Activated CD4-positive, alpha-beta T cell treated with anti-CD3 and anti-CD28 coated beads for 36 hours (primary cell): ENCODE measurements at regions of chr13 and their contacts with region 1.

Region 1: GRCh38 chr13:48400850-48401291 is 12.0 kb downstream of the LPAR6 start:
- DNase-seq: no peak
- ATAC-seq: peak; percentile 21
- H3K4me3 Mint-ChIP-seq: no peak overlapping the region
- H3K27ac Mint-ChIP-seq: peak overlapping the region; percentile 1
- H3K4me1 Mint-ChIP-seq: peaks cover 53% of the 10 kb centered on the region
- H3K27me3 Mint-ChIP-seq: no peaks in the 10 kb centered on the region

Region 2: DNA sequence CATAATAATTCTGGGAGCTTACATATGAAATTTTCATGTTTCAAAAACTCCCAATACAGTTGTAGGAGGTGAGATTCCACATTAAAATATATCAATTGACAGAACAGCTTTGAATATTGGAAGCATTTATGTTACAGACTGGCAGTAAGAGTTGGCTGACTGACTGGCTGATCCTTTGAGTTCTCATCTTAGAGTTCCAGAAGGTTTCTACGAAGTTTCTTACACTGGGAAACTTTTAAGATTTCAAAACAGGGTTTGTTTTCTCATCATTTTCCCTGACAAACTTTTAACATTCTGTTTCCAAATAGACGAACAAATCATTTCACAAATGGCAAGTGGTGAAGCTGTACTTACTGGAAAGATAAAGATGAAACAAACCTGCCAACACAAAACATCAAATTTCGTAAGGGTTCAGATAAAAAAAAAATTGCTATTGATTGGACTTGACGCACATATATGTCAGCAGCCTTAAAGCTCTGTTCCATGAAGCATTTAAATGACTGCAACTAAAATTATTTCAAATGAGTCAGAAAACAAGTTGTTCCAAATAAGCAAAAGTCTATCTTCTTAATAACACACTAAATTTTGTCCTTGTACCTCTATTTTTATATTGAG is 643.3 kb before region 1 on chr13:
- CTCF ChIA-PET with region 1: no interaction called
- POLR2A ChIA-PET with region 1: no interaction called
- intact Hi-C with region 1: no loop called
- DNase-seq: no peak
- ATAC-seq: no peak
- H3K4me3 Mint-ChIP-seq: no peak overlapping the region
- H3K27ac Mint-ChIP-seq: no peak overlapping the region
- H3K4me1 Mint-ChIP-seq: no peaks in the 10 kb centered on the region
- H3K27me3 Mint-ChIP-seq: peaks cover 7% of the 10 kb centered on the region

Region 3: DNA sequence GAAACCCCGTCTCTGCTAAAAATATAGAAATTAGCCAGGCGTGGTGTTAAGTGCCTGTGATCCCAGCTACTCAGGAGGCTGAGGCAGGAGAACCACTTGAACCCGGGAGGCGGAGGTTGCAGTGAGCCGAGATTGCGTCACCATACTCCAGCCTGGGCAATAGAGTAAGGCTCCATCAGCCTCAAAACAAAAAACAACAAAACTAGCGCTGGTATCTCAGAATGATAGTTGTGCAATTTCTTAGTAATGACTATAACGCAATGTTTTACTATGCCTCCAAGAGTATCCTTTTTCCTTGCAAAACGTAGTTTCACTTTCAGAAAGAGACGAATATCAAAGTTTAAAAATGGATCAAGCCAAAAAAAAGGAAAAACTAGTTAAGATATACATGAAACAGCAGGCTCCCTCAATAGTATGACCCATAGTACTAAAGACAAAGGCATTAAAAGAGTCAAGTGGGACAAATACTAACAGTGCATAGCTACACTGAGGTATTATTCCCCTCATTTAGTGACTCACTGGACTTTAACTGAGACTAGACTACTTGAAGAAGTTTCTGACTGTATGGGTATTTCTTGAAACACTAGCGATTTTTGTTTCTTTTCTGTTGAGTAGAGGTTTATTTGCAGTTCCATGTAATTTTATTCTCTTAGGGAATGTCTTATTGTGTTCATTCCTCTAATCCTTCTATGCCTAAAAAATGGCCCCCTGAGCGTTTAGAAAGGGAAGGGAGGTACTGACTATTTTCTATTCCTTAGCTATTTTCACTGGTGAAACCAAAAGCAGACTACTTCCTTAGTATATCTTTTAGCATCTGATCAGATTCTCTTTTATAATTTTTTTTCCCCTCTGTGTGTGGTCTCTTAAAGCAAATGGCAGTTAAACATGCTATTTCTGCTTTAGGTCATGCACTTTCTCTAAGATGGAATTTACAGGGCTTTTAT is 178.2 kb before region 1 on chr13:
- CTCF ChIA-PET with region 1: no interaction called
- POLR2A ChIA-PET with region 1: no interaction called
- intact Hi-C with region 1: loop called (anchors 2 to 5 kb)
- DNase-seq: no peak
- ATAC-seq: peak; percentile 67
- H3K4me3 Mint-ChIP-seq: peak overlapping the region; percentile 39
- H3K27ac Mint-ChIP-seq: no peak overlapping the region
- H3K4me1 Mint-ChIP-seq: peaks cover 50% of the 10 kb centered on the region
- H3K27me3 Mint-ChIP-seq: no peaks in the 10 kb centered on the region

Region 4: DNA sequence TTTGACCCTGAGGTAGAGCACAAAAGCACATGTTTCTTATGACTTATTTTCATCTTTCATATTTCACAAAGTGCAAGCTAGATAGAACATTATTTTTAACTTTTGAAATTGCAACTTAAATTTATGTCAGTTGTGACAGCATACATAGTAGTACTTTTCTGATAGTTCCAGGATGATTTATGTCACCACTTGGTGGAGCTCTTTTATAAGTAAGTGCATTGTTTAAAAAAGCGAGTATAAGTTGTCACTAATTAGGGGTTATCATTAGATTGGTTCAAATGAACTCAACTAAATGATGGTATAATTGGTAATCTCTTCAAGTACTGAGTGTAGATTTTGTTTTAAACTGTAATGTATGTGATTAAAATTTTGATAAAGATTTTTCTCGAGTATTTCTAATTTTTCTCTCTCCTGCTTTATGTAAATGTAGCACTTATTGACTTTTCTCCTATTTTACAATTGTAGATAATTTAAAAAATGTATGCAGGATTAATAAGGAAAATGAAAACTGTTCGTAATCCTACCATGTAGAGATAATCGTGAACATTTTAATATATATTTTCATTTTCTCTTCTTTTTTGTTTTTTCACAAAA is 66.2 kb before region 1 on chr13:
- CTCF ChIA-PET with region 1: no interaction called
- POLR2A ChIA-PET with region 1: no interaction called
- intact Hi-C with region 1: no loop called
- DNase-seq: no peak
- ATAC-seq: no peak
- H3K4me3 Mint-ChIP-seq: no peak overlapping the region
- H3K27ac Mint-ChIP-seq: no peak overlapping the region
- H3K4me1 Mint-ChIP-seq: peaks cover 7% of the 10 kb centered on the region
- H3K27me3 Mint-ChIP-seq: no peaks in the 10 kb centered on the region

Region 5: DNA sequence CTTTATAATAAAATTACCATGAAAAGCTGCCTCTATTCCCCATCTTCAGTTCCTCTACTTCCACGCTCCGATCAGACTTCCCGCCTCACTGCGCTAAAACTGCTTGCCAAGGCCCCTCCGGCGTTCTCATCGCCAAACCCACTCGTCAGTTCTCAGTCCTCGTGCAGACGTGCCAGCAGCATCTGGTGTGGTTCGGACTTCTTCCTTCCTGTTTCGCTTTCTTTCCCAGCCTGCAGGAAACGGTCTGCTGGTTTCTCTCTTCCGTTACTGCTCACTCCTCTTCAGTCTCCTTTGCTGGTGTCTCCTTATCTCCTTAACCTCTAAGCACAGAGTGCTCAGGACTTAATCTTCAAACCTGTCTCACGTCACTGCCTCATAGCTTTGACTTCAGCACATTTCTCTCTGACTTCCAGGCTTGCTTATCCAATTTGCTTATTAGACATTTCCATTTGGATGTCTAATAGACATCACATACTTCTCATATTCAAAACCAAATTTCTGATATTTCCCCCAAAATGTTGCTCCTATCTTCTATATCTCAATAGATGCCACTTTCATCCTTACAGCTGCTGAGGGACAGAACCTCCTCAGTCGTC is 91.7 kb after region 1 on chr13:
- CTCF ChIA-PET with region 1: no interaction called
- POLR2A ChIA-PET with region 1: no interaction called
- intact Hi-C with region 1: loop called in 1 of 2 experiments (anchors 2 kb)
- DNase-seq: peak; percentile 77
- ATAC-seq: peak; percentile 80
- H3K4me3 Mint-ChIP-seq: no peak overlapping the region
- H3K27ac Mint-ChIP-seq: no peak overlapping the region
- H3K4me1 Mint-ChIP-seq: peaks cover 18% of the 10 kb centered on the region
- H3K27me3 Mint-ChIP-seq: no peaks in the 10 kb centered on the region

Region 6: GRCh38 chr13:48562296-48563066 is 161.6 kb after region 1 on chr13:
- CTCF ChIA-PET with region 1: no interaction called
- POLR2A ChIA-PET with region 1: no interaction called
- intact Hi-C with region 1: loop called (anchors 1 kb)
- DNase-seq: peak; percentile 76
- ATAC-seq: peak; percentile 98
- H3K4me3 Mint-ChIP-seq: no peak overlapping the region
- H3K27ac Mint-ChIP-seq: no peak overlapping the region
- H3K4me1 Mint-ChIP-seq: peaks cover 30% of the 10 kb centered on the region
- H3K27me3 Mint-ChIP-seq: peaks cover 58% of the 10 kb centered on the region

Region 7: GRCh38 chr13:48885027-48885395 is 484.1 kb after region 1 on chr13:
- CTCF ChIA-PET with region 1: no interaction called
- POLR2A ChIA-PET with region 1: no interaction called
- intact Hi-C with region 1: loop called in 1 of 2 experiments (anchors 2 kb)
- DNase-seq: no peak
- ATAC-seq: no peak
- H3K4me3 Mint-ChIP-seq: no peak overlapping the region
- H3K27ac Mint-ChIP-seq: peak overlapping the region; percentile 58
- H3K4me1 Mint-ChIP-seq: peaks cover 62% of the 10 kb centered on the region
- H3K27me3 Mint-ChIP-seq: peaks cover 3% of the 10 kb centered on the region